ENCODE measurements at regions of chr2 and their contacts with region 1.

Region 1: GRCh38 chr2:169397697-169398096 is 35.4 kb upstream of the LRP2 start:
- DNase-seq: no peak
- H3K4me3 ChIP-seq: no peak overlapping the region
- H3K27ac ChIP-seq: no peak overlapping the region
- H3K4me1 ChIP-seq: peaks cover 7% of the 10 kb centered on the region
- H3K27me3 ChIP-seq: no peaks in the 10 kb centered on the region
- CTCF ChIP-seq: peak; percentile 29 to 50

Region 2: GRCh38 chr2:168948621-168949212 is 449.0 kb before region 1 on chr2:
- CTCF ChIA-PET with region 1: no interaction called
- dilution Hi-C with region 1: no loop called
- in situ Hi-C with region 1: loop called (anchors 25 kb)
- intact Hi-C with region 1: no loop called
- DNase-seq: no peak
- H3K4me3 ChIP-seq: no peak overlapping the region
- H3K27ac ChIP-seq: no peak overlapping the region
- H3K4me1 ChIP-seq: peaks cover 5% of the 10 kb centered on the region
- H3K27me3 ChIP-seq: no peaks in the 10 kb centered on the region
- CTCF ChIP-seq: peak; percentile 63 to 66

Region 3: DNA sequence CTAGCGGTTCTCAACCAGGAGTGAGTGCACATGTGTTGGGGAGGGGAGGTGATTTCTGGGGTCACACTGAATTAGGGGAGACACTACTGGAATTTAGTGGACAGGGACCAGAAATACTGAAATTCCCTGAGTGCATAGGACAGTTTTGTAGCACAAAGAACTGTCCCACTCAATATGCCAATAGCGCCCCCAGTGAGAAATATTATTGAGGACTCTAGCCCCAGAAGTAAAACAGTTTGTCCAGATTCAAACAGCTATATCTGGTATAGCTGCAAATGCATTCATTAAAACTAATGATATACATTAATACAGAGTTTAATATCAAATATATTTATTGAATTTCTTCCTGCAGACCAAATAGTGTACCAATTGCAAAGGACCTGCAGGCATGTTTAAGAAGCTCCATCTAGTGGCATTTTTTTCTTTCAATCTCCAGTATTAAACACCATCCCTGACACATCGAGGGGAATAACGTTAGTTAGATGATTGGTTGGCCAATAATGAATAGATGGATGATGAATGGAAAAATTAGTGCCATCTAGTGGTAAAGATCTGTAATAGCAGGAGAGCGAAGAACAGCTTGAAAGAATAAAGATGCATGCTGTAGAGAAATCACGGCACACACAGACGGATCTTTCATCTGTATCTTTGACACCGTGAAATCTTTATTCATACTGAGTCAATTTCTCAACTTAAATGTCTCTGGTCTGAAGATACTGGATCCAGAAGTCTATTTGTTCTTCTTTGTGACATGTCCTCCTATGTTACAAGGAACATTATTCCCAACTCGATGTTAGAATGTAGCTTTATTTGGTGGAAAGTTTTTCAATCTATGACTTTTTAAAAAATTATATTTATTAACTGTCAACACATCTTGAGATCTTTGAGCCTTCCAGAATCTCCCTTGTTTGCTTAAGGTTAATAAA is 265.8 kb before region 1 on chr2:
- CTCF ChIA-PET with region 1: no interaction called
- dilution Hi-C with region 1: no loop called
- in situ Hi-C with region 1: no loop called
- intact Hi-C with region 1: loop called (anchors 5 kb)
- DNase-seq: peak; percentile 80
- H3K4me3 ChIP-seq: no peak overlapping the region
- H3K27ac ChIP-seq: no peak overlapping the region
- H3K4me1 ChIP-seq: no peaks in the 10 kb centered on the region
- H3K27me3 ChIP-seq: no peaks in the 10 kb centered on the region
- CTCF ChIP-seq: peak; percentile 72 to 78

Region 4: GRCh38 chr2:169221745-169222369 is 175.8 kb before region 1 on chr2:
- CTCF ChIA-PET with region 1: interaction called, 3 read pairs
- dilution Hi-C with region 1: no loop called
- in situ Hi-C with region 1: no loop called
- intact Hi-C with region 1: loop called (anchors 10 kb)
- DNase-seq: peak; percentile 3
- H3K4me3 ChIP-seq: no peak overlapping the region
- H3K27ac ChIP-seq: no peak overlapping the region
- H3K4me1 ChIP-seq: no peaks in the 10 kb centered on the region
- H3K27me3 ChIP-seq: no peaks in the 10 kb centered on the region
- CTCF ChIP-seq: peak; percentile 46 to 51

Region 5: GRCh38 chr2:169452080-169452479 is 54.4 kb after region 1 on chr2:
- CTCF ChIA-PET with region 1: interaction called, 16 read pairs
- dilution Hi-C with region 1: no loop called
- in situ Hi-C with region 1: no loop called
- intact Hi-C with region 1: no loop called
- DNase-seq: peak; percentile 5
- H3K4me3 ChIP-seq: no peak overlapping the region
- H3K27ac ChIP-seq: no peak overlapping the region
- H3K4me1 ChIP-seq: no peaks in the 10 kb centered on the region
- H3K27me3 ChIP-seq: no peaks in the 10 kb centered on the region
- CTCF ChIP-seq: peak; percentile 32 to 52

Measured in mammary epithelial cell (primary cell).